Activated T-helper 1 cell treated with anti-CD3 and anti-CD28 coated beads, Interleukin-12 subunit alpha, Interleukin-12 subunit beta, Interleukin-2, Interleukin-4 antibody, amounts not matched to agents 30 ng/mL and 10 ng/mL and 1 ng/mL, durations not matched to agents 14 hours and 24 hours and 36 hours (primary cell): ENCODE measurements at regions of chr21 and their contacts with region 1.

Region 1: GRCh38 chr21:42684109-42684916 is 30.9 kb downstream of the PDE9A start:
- DNase-seq: peak; percentile 48
- H3K4me3 Mint-ChIP-seq: peak overlapping the region; percentile 79
- H3K27ac Mint-ChIP-seq: peak overlapping the region; percentile 97
- H3K4me1 Mint-ChIP-seq: peaks cover 43% of the 10 kb centered on the region
- H3K27me3 Mint-ChIP-seq: no peaks in the 10 kb centered on the region

Region 2: GRCh38 chr21:42609811-42610210 is 74.5 kb before region 1 on chr21:
- intact Hi-C with region 1: loop called (anchors 1 kb)
- DNase-seq: peak; percentile 45
- H3K4me3 Mint-ChIP-seq: no peak overlapping the region
- H3K27ac Mint-ChIP-seq: no peak overlapping the region
- H3K4me1 Mint-ChIP-seq: peaks cover 12% of the 10 kb centered on the region
- H3K27me3 Mint-ChIP-seq: peaks cover 10% of the 10 kb centered on the region

Region 3: GRCh38 chr21:42653231-42654061 is 30.9 kb before region 1 on chr21 and contains the start of gene PDE9A:
- intact Hi-C with region 1: loop called (anchors 1 kb)
- DNase-seq: no peak
- H3K4me3 Mint-ChIP-seq: peak within 1 kb of the TSS; percentile 82
- H3K27ac Mint-ChIP-seq: no peak within 1 kb of the TSS
- H3K4me1 Mint-ChIP-seq: peaks cover 10% of the 10 kb centered on the region
- H3K27me3 Mint-ChIP-seq: peaks cover 37% of the 10 kb centered on the region
- total RNA-seq, gene PDE9A: 9.6 and 9.7 TPM in 2 replicates

Region 4: DNA sequence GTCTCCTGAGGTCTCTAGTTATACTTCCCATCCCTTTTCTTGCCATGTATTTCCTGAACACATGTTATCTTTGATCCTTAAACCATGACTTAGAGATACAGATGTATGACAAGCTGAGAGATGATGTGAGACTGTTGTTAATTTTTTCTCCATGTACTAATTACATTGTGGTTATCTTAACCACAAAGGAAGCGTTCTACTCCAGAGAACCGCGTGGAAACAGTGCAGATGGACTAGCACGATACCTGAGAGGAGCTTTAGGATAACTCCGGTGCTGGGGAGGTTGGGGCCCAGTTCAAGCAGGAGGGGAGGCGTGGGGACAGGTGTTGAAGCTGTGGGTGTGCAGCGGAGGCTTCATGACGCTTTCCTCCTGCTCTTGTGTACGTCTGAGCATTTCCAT is 13.4 kb before region 1 on chr21:
- intact Hi-C with region 1: loop called (anchors 1 kb)
- DNase-seq: no peak
- H3K4me3 Mint-ChIP-seq: no peak overlapping the region
- H3K27ac Mint-ChIP-seq: no peak overlapping the region
- H3K4me1 Mint-ChIP-seq: no peaks in the 10 kb centered on the region
- H3K27me3 Mint-ChIP-seq: peaks cover 2% of the 10 kb centered on the region

Region 5: GRCh38 chr21:42737951-42738590 is 53.8 kb after region 1 on chr21:
- intact Hi-C with region 1: loop called (anchors 2 kb)
- DNase-seq: peak; percentile 8
- H3K4me3 Mint-ChIP-seq: peak overlapping the region; percentile 77
- H3K27ac Mint-ChIP-seq: peak overlapping the region; percentile 98
- H3K4me1 Mint-ChIP-seq: peaks cover 57% of the 10 kb centered on the region
- H3K27me3 Mint-ChIP-seq: peaks cover 2% of the 10 kb centered on the region

Region 6: DNA sequence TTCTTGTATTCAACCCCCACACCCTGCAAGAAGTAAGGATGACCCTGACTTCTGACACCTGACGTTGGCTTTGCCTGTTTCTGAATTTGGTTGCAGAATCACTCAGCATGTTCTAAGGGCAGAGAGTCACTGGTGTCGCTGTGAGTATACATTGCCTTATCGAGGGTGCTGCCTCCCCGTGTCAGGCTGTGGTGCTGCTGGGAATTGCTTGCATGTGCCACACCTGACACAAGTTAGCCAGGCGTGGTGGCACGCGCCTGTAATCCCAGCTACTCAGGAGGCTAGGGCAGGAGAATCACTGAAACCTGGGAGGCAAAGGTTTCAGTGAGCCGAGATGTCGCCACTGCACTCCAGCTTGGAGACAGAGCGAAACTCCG is 149.1 kb after region 1 on chr21:
- intact Hi-C with region 1: loop called (anchors 5 kb)
- DNase-seq: peak; percentile 40
- H3K4me3 Mint-ChIP-seq: peak overlapping the region; percentile 71
- H3K27ac Mint-ChIP-seq: peak overlapping the region; percentile 59
- H3K4me1 Mint-ChIP-seq: peaks cover 23% of the 10 kb centered on the region
- H3K27me3 Mint-ChIP-seq: peaks cover 7% of the 10 kb centered on the region